Lower leg skin (tissue), 4 donors: ENCODE measurements at regions of chr15 and their contacts with region 1.

Region 1: DNA sequence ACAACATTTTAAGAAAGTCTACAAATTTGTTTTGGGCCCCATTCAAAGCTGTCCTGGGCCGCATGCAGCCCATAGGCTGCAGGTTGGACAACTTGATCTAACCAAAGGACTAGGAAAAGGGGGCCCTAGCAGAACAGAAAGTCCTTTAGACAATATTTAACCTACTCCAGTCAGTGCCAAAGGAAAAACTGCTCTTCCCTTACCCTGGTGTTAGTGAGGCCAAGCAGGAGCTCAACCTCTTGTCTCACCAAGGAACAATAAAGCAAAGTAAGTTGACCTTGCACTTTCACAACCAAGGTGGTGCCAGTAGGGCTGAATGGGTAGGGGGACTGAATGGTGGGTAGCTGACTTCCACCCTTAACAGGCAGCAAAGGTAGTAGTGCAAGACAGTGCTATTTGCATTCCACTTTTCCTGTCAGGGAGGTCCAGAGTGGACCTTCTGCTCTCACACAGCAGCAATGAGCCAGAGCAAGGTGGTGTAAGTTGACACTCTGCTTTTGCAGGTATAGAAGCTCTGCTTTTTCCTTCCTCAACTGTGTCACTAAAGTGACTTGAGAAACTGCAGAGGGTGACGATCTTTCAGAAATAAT is 124.9 kb downstream of the WDR72 start:
- DNase-seq: no peak
- H3K4me3 ChIP-seq: no peak overlapping the region
- CTCF ChIP-seq: no peak
- POLR2A ChIP-seq: no peak

Region 2: DNA sequence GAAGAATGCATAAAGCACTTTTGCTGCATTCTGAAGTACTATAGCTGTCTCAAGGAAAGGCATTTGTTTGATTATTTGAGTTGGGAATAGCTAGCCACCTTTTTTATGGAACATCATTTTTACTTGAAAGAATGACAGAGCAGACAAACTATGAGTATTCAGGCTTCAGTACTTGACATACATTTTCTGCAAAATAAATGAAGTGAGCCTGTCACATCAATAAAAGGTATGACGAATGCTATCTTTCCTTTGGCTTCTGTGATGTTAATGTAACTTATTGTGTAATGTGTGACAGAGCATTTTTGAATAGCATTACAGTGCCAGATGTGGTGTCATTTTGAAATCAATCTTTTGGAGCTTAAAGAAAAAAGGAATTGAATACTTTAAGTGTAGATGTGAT is 404.1 kb before region 1 on chr15:
- intact Hi-C with region 1: no loop called
- DNase-seq: no peak
- H3K4me3 ChIP-seq: no peak overlapping the region
- CTCF ChIP-seq: no peak
- POLR2A ChIP-seq: no peak

Region 3: DNA sequence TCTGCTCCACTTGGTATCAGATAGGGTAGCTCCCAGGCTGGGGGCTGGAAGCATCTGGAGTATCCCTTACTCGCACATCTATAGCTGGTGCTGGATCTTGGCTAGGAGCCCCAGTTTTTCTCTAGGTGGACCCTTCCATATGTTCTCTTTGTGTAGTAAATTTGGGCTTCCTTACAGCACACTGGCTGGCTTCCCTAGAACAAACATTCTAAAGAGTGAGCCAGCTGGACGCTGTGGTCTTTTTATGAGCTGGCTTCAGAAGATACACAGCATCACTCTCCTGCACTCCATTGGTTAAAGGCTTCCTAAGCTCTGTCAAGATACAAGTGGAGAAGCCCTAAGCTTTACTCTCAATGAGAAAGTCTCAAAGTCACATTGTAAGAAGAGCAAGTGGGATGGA is 197.2 kb before region 1 on chr15:
- intact Hi-C with region 1: no loop called
- DNase-seq: no peak
- H3K4me3 ChIP-seq: no peak overlapping the region
- CTCF ChIP-seq: no peak
- POLR2A ChIP-seq: no peak

Region 4: GRCh38 chr15:53693729-53694475 is 59.3 kb after region 1 on chr15:
- intact Hi-C with region 1: loop called (anchors 10 kb)
- DNase-seq: peak in 1 of 2 donors; percentile 38
- H3K4me3 ChIP-seq: no peak overlapping the region
- CTCF ChIP-seq: no peak
- POLR2A ChIP-seq: no peak